GM18951 (cell line): ENCODE measurements at regions of chr6 and their contacts with region 1.

Region 1: GRCh38 chr6:105484238-105485161 is 81.6 kb upstream of the PREP start:
- POLR2A ChIP-seq: no peak

Region 2: GRCh38 chr6:105431226-105431625 is 53.3 kb before region 1 on chr6:
- in situ Hi-C with region 1: loop called (anchors 5 kb)
- POLR2A ChIP-seq: no peak

Region 3: DNA sequence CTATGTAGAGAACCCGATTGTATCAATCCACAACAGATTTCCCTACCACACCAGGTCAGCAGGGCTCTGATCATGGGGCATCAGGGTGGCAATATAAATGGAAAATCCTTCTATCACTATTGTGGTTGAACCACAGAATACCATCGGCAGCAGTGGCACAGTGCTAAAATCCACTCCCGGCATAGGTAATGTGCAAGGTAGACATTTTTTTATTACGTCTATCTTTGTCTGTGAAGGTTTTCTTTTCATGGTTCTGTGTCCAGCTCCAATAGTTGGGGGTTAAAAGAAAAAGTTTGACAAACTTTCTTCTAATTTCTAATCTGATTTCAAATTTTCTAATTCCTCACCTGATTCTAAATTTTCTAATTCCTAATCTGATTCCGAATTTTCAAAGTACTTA is 221.1 kb after region 1 on chr6:
- in situ Hi-C with region 1: no loop called
- POLR2A ChIP-seq: no peak

Region 4: GRCh38 chr6:105733565-105734162 is 249.2 kb after region 1 on chr6:
- in situ Hi-C with region 1: loop called (anchors 25 kb)
- POLR2A ChIP-seq: no peak

Region 5: DNA sequence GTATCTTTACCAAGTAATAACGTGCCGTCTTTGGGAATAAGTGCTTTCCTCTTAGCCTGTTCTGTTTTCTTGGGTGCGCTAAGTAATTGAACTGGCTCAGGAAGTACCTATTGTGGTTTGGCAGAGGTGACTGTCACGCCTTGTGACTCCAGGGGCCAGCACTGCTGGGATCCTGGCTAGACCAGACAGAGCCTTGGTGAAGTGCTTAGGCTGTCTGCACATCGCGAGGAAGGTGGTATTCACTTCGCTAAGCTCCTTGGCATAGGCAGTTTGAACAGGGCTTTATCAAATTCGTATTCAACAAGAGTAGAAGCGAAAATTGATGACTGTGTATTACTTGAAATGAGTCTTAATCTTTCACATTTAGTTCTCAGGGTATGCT is 619.2 kb after region 1 on chr6:
- in situ Hi-C with region 1: loop called (anchors 5 kb)
- POLR2A ChIP-seq: no peak

Region 6: DNA sequence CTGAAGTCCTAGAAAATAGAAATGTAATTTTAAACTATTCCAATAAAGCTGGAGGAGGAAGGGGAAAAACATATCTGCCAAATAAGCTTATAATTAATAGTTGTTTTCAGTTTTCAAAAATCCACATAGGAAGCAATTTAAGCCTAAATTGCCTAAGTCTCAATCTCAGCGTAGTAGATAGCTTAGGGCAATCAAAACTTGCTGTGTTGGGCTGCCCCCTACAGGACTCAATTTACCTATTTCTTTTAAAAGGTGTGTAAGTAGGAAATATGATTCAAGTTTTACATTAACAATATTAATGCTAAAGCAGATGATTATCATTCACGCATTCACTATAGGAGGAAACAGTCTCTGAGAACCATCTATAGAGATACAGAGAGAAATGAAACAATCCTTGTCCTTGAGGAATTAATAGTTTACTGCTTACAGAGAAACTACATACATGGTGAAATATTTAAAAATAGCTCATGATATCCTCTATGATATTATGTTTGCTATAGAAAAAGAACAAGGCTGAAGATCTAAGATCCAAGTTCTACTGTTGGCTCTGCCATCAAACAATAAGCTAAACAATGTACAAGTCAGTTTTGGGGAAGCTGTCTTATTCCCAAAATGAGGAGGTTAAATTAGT is 738.9 kb after region 1 on chr6:
- in situ Hi-C with region 1: loop called (anchors 25 kb)
- POLR2A ChIP-seq: no peak